Head of caudate nucleus (tissue), 42 donors: ENCODE measurements at regions of chr7 and their contacts with region 1.

Region 1: GRCh38 chr7:21427182-21427870 is 557 bp upstream of the SP4 start:
- DNase-seq: peak; percentile 97 to 100 (median 99)

Region 2: DNA sequence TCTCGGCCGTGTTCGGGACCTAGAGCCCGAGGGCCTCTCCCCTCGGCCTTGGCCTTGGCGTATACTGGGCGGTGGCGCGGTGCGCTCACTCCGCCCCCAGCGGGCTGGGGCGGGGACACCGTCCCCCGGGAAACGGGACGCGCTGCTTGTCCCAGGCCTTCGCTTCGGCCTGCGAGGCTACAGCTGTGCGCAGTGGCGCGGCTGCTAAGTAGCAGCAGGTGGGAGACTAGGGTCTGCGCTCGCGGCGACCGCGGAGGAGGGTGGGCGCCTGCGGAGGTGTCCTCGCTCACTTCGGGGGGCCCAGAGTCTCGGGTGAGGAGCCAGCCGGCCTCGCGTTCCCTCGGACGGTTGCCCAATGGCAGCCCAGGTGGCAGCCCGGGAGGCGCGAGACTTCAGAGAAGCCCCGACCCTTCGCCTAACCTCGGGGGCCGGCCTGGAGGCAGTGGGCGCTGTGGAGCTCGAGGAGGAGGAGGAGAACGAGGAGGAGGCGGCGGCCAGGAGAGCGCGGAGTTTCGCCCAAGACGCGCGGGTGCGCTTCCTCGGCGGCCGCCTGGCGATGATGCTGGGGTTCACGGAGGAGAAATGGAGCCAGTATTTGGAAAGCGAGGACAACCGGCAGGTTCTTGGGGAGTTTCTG is 115.7 kb after region 1 on chr7 and contains the start of gene DNAH11:
- intact Hi-C with region 1: no loop called
- DNase-seq: peak in 5 of 42 donors; percentile 5 to 32 (median 10)

Region 3: DNA sequence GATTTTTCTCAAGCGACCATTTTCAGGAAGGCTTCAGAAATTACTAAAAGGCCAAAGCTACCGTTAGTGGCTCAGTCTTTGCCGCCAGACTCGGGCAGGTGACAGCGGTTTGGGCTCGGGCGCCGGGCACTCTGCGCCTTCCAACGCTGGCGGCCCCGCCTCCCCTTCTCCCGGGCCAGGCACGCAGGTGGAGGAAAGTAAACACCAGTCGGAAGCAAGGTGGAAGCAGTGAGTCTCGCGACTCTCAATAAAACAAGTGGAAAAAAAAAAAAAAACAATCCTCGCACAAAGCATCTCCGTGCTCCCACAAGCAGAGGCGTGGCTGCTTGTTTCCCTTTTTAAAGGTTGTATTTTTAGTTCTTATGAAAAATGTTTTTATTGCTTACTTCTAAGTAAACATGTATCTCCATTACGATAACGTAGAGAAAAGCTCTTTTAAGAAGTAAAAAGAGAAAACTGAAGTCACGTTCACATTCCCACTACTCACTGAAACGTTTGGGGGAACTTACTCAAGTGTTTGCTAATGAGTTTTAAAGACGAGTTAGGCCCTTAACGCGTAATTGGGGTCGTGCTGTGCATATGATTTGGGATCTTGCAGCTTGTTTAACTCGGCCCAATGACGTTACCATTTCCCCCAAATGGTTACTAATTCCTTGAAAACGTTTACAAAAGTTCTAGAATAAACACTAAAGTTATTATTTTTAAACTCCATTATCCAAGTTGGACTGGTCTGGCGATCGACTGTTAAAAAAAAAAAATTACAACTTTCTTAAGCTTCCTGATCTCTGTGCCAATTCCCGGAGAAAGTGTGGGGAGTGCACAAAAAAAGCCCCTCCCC is 517.5 kb after region 1 on chr7:
- intact Hi-C with region 1: loop called (anchors 5 kb)
- DNase-seq: peak in 31 of 42 donors; percentile 10 to 62 (median 30)